ENCODE measurements at regions of chr22 and their contacts with region 1.

Region 1: DNA sequence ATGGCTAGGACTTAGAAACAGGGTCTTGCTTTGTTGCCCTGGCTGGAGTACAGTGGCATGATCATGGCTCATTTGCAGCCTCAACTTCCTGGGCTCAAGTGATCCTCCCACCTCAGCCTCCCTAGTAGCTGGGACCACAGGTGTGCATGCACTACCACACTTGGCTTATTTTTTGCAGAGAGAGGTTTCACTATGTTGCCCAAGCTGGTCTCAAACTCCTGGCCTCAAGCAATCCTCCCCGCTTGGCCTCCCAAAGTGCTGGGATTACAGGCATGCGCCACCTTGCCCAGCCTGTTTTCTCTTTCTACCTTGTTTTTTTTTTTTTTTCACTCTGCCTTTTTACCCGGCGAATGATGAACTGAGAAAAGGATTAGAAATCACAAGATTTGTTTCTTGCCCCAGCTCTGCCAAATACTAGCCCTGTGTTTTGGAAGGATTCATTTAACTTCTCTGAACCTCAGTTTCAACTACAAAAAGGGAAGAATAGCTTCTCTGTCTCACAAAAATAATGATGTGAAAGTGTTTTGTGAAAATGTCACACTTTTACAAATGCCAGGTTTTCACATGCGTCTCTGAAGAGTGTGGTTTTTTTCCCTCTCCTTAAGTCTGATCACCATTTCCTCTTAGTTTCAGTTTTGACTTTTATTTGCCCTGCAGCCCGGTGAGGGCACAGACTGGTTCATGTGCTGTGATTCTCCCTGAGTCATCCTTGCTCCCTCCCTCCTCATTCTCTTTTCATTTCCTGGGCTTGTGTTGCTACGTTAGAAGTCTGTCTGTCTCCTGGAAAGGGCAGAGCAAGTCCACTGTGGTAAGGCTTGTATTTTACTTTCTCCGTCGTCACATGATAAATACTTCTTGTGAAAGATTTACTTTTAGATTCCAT is 67.7 kb downstream of the BCL2L13 start:
- DNase-seq: peak; percentile 21 to 76
- H3K4me3 ChIP-seq: peak overlapping the region; percentile 42 to 59
- H3K27ac ChIP-seq: peak overlapping the region; percentile 65 to 67
- H3K4me1 ChIP-seq: no peaks in the 10 kb centered on the region
- H3K27me3 ChIP-seq: no peaks in the 10 kb centered on the region
- CTCF ChIP-seq: no peak

Region 2: DNA sequence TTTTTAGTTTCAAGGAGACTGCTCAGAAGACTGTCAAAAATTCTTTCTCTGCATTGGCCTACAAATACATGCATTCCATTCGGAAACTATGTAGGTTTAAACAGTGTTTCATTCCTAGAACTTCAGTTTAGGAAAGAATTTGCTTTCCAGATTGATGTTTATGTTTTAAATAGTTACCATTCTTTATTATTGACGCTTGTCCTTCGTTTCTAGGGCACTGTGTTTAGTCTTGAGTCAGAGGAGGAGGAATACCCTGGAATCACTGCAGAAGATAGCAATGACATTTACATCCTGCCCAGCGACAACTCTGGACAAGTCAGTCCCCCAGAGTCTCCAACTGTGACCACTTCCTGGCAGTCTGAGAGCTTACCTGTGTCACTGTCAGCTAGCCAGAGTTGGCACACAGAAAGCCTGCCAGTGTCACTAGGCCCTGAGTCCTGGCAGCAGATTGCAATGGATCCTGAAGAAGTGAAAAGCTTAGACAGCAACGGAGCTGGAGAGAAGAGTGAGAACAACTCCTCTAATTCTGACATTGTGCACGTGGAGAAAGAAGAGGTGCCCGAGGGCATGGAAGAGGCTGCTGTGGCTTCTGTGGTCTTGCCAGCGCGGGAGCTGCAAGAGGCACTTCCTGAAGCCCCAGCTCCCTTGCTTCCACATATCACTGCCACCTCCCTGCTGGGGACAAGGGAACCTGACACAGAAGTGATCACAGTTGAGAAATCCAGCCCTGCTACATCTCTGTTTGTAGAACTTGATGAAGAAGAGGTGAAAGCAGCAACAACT is 20.4 kb after region 1 on chr22:
- intact Hi-C with region 1: loop called (anchors 2 kb)
- DNase-seq: no peak
- H3K4me3 ChIP-seq: no peak overlapping the region
- H3K27ac ChIP-seq: peak overlapping the region; percentile 35 to 77
- H3K4me1 ChIP-seq: peaks cover 3 to 20% of the 10 kb centered on the region in 2 donors
- H3K27me3 ChIP-seq: no peaks in the 10 kb centered on the region
- CTCF ChIP-seq: no peak